HEK293T (cell line): ENCODE measurements at regions of chr2 and their contacts with region 1.

Region 1: GRCh38 chr2:174248187-174248997 is at the start of gene OLA1:
- DNase-seq: peak; percentile 94

Region 2: GRCh38 chr2:174217869-174218268 is 30.5 kb before region 1 on chr2:
- CTCF ChIA-PET with region 1: no interaction called
- POLR2A ChIA-PET with region 1: no interaction called
- DNase-seq: no peak

Region 3: GRCh38 chr2:174235680-174236079 is 12.7 kb before region 1 on chr2:
- CTCF ChIA-PET with region 1: interaction called, 3 read pairs
- POLR2A ChIA-PET with region 1: interaction called, 11 read pairs
- DNase-seq: no peak

Region 4: DNA sequence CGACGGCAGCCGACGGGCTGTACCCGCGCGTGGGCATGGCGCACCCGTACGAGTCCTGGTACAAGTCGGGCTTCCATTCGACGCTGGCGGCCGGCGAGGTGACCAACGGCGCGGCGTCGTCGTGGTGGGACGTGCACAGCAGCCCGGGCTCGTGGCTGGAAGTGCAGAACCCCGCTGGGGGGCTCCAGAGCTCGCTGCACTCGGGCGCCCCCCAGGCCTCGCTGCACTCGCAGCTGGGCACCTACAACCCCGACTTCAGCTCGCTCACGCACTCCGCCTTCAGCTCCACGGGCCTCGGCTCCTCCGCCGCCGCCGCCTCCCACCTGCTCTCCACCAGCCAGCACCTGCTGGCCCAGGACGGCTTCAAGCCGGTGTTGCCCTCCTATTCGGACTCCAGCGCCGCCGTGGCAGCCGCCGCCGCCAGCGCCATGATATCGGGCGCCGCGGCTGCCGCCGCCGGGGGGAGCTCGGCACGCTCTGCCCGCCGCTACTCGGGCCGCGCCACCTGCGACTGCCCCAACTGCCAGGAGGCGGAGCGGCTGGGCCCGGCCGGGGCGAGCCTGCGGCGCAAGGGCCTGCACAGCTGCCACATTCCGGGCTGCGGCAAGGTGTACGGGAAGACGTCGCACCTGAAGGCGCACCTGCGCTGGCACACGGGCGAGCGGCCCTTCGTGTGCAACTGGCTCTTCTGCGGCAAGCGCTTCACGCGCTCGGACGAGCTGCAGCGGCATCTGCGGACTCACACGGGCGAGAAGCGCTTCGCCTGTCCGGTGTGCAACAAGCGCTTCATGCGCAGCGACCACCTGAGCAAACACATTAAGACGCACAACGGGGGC is 88.3 kb after region 1 on chr2:
- CTCF ChIA-PET with region 1: interaction called, 4 read pairs
- POLR2A ChIA-PET with region 1: interaction called, 13 read pairs
- DNase-seq: peak; percentile 55